Posterior cingulate gyrus (tissue), 11 donors: ENCODE measurements at regions of chr11 and their contacts with region 1.

Region 1: DNA sequence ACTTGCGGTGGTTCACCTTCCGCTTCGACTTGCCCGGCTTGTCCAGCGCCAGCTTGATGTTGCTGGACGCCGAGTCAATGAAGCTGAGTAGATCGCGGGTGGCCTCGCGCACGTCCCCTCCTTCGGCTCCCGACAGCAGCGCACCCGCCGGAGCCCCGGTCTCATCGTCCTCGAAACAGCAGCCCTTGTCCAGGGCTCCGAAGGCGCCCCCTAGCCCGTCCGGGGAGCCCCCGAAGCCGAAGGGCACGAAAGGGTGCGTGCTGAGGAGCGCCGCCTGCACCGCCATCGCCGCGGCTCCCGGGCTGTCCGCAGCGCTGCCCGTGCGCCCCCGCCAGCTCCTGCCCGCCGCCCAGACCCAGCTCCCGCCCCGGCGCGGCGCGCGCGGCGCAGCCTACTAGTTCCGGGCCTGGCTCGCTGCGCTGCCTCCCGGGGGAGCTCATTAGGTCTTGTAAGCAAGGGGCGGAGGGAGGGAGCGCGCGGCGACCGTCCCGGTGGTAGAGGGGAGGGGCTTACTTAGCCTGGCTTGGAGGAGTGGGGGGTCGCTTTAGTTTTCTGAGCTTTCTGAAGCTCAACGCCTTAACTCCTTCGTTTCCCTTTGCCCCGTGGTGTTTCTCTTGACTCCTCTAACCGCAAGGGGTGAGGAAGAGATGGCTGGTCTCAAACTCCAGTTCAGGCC is at the start of gene FAM181B:
- DNase-seq: peak; percentile 62 to 97 (median 79)

Region 2: GRCh38 chr11:82653752-82654151 is 79.8 kb before region 1 on chr11:
- intact Hi-C with region 1: no loop called
- DNase-seq: peak in 2 of 10 donors; percentile 55 to 69

Region 3: DNA sequence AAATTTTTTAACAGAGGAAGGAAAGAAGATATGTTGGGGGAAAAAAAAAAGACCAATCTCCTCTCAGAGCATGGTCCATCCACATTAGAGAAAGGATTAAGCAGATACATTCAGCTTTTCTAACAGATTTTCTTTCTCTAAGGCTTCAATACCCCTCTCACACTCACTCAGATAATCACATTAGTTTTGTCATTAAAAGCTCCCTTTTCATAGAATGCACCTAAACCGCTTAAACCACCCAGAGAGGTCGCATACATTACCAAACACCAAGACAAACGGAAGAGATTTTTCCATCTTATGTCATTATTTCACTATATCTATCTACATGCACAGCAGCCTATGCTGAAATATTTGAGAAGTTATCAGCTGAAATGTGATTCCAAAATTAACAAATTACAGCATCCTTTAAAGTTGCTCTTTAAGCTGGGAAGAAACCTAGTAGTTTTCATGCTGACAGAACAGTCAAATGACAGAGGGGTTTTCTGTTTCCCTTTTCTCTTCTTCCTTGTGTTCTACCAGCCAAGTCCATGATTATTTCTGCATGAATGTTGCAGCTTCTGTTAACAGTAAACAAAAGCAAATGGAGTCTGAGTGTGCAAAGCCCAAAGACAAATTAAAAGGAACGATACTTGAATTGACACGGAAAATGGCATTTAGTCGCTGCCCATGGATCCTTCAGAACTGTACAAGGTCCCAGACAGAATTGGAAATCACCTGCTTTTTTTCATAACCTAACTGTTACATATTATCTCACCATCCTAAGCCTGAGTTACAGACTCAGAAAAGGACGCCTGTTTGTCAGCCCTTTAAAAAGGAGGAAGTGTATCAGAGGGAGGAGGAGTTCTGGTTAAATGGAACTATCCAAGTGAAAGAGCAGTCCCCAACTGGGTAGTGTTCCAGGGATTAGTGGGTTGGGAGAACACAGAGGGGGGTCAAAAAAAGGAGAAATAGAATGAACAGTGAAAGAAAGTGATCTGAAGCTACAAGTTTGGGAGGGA is 112.1 kb after region 1 on chr11:
- intact Hi-C with region 1: loop called (anchors 5 kb)
- DNase-seq: no peak

Region 4: DNA sequence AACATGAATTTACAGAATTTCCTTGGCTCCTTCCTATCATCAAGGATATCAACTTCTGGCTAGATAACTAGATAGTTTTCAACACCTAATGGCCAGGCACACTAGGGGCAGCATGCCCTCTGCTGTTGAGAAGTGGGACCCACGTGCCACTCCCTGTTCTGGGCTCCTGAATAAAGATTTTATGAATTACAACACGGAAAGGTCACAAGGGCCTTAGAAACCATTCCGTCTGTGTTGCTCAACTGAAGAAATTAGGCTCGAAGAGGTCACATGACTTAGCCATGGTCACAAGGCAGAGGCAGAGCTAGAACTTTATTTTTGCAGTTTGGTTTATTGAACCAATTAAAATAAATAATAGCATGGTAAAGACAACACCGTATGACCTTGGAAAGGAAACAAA is 130.7 kb after region 1 on chr11:
- intact Hi-C with region 1: loop called (anchors 5 kb)
- DNase-seq: peak; percentile 38 to 95 (median 72)